Caco-2 (cell line): ENCODE measurements at regions of chr18 and their contacts with region 1.

Region 1: GRCh38 chr18:3947383-3947782 is 497.4 kb downstream of the TGIF1 start:
- DNase-seq: no peak
- H3K4me3 ChIP-seq: no peak overlapping the region
- H3K4me3 Mint-ChIP-seq: no peak overlapping the region
- H3K27ac Mint-ChIP-seq: no peak overlapping the region
- H3K4me1 ChIP-seq: no peaks in the 10 kb centered on the region
- H3K4me1 Mint-ChIP-seq: no peaks in the 10 kb centered on the region
- H3K27me3 ChIP-seq: no peaks in the 10 kb centered on the region
- H3K27me3 Mint-ChIP-seq: no peaks in the 10 kb centered on the region
- CTCF ChIP-seq: no peak

Region 2: GRCh38 chr18:3885209-3885792 is 62.1 kb before region 1 on chr18:
- CTCF ChIA-PET with region 1: no interaction called
- POLR2A ChIA-PET with region 1: no interaction called
- intact Hi-C with region 1: loop called (anchors 10 kb)
- DNase-seq: peak in 1 of 2 experiments; percentile 25
- H3K4me3 ChIP-seq: no peak overlapping the region
- H3K4me3 Mint-ChIP-seq: no peak overlapping the region
- H3K27ac Mint-ChIP-seq: no peak overlapping the region
- H3K4me1 ChIP-seq: peaks cover 19% of the 10 kb centered on the region
- H3K4me1 Mint-ChIP-seq: peaks cover 20% of the 10 kb centered on the region
- H3K27me3 ChIP-seq: no peaks in the 10 kb centered on the region
- H3K27me3 Mint-ChIP-seq: no peaks in the 10 kb centered on the region
- CTCF ChIP-seq: peak; percentile 33 to 48